ENCODE measurements at regions of chr15 and their contacts with region 1.

Region 1: GRCh38 chr15:94119923-94120775 is 111.2 kb upstream of the MCTP2 start:
- DNase-seq: peak in 1 of 2 donors; percentile 77
- H3K4me3 ChIP-seq: peak overlapping the region in 1 of 2 donors; percentile 20
- H3K27ac ChIP-seq: peak overlapping the region; percentile 59 to 73
- H3K4me1 ChIP-seq: peaks cover 0 to 5% of the 10 kb centered on the region in 2 donors
- H3K27me3 ChIP-seq: no peaks in the 10 kb centered on the region
- CTCF ChIP-seq: peak; percentile 80 to 88 (median 83)

Region 2: DNA sequence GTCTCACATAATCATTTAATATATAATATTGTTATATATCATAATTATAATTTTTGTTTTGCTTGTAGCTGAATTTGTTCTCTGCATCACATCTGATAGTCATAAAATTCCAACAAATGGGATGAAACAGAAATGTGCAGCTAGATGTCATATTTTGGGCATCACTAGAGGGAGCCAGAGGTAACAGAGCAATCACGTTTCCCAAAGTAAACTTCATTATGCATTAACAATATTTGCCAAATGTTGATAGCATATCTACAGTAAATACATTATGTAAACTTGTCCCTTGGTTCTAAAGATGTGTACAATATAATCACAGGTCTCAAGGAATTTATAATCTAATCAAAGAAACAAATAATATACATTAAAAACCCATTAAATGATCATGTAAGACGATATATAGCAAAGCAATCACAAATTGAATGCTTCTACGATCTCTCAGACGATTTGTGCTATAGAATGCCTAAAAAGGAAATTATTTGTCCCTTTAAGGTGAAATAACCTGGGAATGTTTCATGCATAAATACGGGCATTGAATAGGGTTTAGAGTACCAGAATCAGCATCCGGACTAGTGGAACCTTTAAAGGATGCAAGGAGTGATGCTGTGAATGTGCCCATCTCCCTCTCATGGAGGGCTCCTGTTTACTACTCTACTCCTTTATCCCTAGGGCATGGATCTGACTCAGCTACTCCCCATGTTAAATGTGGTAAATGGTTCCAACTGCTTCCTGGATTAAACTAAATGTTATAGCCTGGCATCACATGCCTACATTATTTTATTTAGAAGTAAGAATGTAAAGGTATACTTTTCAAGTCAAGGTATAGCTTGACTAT is 122.8 kb before region 1 on chr15:
- intact Hi-C with region 1: loop called (anchors 2 kb)
- DNase-seq: no peak
- H3K4me3 ChIP-seq: no peak overlapping the region
- H3K27ac ChIP-seq: no peak overlapping the region
- H3K4me1 ChIP-seq: no peaks in the 10 kb centered on the region
- H3K27me3 ChIP-seq: no peaks in the 10 kb centered on the region
- CTCF ChIP-seq: peak in 2 of 3 experiments; percentile 33 to 49

Region 3: DNA sequence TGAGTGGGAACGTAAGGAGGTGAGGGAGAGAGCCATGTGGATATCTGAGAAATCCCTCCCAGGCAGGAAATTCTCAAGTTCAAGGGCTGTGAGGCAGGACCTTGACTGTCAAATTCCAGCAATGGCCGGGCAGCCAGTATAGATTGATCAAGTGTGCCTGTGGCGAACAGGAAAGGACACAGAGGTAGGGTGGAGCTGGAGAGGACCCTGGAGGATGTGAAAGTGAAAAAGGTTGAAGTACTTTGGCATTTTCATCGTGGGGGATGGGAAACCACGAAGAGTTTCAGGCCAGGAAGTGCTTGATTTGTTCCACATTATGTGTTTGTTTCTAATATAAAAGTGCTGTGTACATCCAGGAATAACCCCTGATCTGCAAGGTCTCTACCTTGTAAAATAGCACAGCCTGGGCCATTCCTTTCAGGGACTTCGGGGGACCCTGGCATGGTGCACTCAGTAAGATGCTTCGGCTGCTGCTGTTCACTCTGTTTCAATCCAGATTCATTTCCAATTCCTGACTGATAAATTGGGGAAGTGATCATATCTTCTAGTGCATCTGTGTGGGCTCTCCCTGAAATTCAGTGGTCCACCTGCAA is 267.8 kb after region 1 on chr15:
- intact Hi-C with region 1: no loop called
- DNase-seq: no peak
- H3K4me3 ChIP-seq: no peak overlapping the region
- H3K27ac ChIP-seq: no peak overlapping the region
- H3K4me1 ChIP-seq: no peaks in the 10 kb centered on the region
- H3K27me3 ChIP-seq: no peaks in the 10 kb centered on the region
- CTCF ChIP-seq: no peak

Measured in ascending aorta (tissue), 2 donors.